ENCODE measurements at regions of chr7 and their contacts with region 1.

Region 1: DNA sequence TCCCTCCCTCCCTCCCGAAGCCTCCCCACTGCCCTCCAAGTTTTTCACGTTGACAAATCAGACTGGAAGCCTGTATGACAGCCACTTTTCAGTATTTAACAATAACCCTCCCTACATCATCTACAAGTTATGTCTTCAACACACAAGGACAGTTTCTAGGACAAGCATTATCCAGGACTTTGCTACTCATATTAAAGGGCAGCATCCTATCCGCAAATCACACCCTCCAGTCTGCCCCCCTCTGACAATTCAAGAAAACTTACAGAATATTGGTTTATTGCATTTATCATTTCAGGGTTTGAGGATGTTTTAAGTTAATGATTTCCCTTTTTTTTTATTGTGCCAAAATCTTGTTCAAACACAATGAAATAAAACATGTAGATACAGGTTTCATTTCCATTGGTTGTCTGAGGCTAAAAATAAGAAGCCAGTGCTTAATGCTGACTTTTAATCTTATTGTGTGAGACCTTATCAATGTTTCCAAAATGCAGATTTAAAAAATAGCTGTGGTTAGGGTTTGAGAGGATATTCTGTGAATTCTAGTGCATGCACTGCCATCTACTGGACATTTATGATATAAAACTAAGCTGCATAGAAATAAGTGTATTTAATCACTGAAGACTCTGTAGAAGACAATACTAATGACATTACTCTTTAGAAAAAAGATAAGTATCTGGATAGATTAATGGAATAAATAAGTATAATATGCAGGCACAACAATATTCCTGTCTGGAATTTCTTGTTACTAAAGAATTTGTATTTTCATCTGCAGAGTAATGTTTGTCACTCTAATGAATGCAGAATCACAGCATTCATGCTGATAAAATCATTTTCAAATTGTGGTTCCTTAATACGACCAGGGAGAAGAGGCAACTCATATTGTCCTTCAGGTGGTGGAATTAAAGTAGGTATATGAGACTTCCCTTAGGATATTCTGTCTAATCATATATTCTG is 64.1 kb downstream of the CAV1 start:
- DNase-seq: peak; percentile 21
- H3K4me3 ChIP-seq: no peak overlapping the region; a peak in 1 of 4 replicates
- H3K27ac ChIP-seq: peak overlapping the region; percentile 7 to 76; a peak in 3 of 4 replicates
- H3K4me1 ChIP-seq: peaks cover 5 to 19% of the 10 kb centered on the region in 2 experiments; a peak in 3 of 4 replicates
- H3K27me3 ChIP-seq: no peaks in the 10 kb centered on the region; the same call in 1 of the 2 replicates
- CTCF ChIP-seq: peak; percentile 93
- EP300 ChIP-seq: 0 out of 4 replicates have a peak, but pooled peaks of 1 of the 2 experiments have one; percentile 1
- RAD21 ChIP-seq: peak; percentile 88

Region 2: DNA sequence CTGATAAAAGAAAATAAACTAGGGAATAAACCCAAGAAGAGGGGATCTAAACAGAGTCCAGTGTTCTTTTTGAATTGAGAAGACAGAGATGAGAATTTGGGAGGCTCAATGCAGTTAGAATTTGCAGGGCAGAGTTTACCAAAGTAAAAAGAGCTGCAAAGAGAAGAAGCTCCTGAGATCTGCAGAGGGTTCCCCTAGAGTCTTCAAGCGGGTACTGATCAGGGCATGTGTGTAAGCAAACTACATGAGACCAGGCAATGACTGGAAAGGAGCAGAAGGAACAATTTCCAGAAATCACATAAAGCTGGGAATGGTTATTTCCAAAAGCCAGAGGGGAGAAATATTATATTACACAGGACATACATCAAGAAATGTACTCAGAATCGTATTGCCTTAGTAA is 436.6 kb before region 1 on chr7:
- CTCF ChIA-PET with region 1: interaction called, 12 read pairs
- POLR2A ChIA-PET with region 1: no interaction called
- DNase-seq: no peak
- H3K4me3 ChIP-seq: no peak overlapping the region
- H3K27ac ChIP-seq: no peak overlapping the region
- H3K4me1 ChIP-seq: no peaks in the 10 kb centered on the region
- H3K27me3 ChIP-seq: peaks cover 49% of the 10 kb centered on the region
- CTCF ChIP-seq: no peak
- EP300 ChIP-seq: no peak
- RAD21 ChIP-seq: no peak

Region 3: DNA sequence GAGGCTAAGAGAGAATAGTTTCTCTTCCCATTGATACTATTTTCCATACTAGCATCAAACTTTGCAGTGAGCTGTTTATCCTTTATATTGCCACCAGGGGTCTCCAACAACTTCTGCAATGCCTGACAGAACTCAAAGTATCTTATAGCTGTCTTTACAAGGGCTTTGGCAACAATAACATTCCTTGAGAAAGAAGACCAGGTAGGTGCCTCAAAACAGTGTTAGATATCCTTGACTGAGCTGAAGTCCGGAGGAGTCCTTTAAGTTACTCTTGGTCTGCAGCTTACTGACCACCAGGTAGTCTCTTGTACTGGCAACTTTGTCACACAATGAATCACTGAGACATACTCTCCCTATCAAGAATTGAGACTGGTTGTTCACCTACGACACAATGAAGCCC is 408.6 kb before region 1 on chr7:
- CTCF ChIA-PET with region 1: interaction called, 35 read pairs
- POLR2A ChIA-PET with region 1: no interaction called
- DNase-seq: peak; percentile 71
- H3K4me3 ChIP-seq: no peak overlapping the region
- H3K27ac ChIP-seq: no peak overlapping the region
- H3K4me1 ChIP-seq: peaks cover 0 to 6% of the 10 kb centered on the region in 2 experiments; a peak in 1 of 4 replicates
- H3K27me3 ChIP-seq: no peaks in the 10 kb centered on the region
- CTCF ChIP-seq: peak; percentile 95
- EP300 ChIP-seq: no peak
- RAD21 ChIP-seq: peak; percentile 95

Region 4: DNA sequence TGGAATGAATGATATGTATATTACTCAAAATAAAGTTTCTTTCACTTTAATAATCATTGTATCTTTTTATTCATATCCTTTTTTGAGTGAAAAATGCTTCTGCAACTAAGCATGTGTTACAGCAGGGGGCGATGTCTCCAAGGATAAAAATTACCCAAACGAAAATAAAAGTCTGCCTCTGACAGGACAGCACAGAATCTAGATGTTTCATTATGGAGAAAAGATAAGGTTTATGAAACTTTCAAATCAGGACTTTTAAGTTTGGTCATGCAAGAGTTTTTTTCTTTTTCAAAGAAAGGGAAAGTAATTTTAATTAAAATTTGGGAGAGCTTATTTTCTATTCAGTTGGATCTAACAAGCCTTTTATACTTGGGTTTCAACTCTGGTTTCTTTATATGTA is 330.2 kb before region 1 on chr7:
- CTCF ChIA-PET with region 1: interaction called, 39 read pairs
- POLR2A ChIA-PET with region 1: no interaction called
- DNase-seq: peak; percentile 32
- H3K4me3 ChIP-seq: peak overlapping the region in 1 of 2 experiments; percentile 4; a peak in 1 of 4 replicates
- H3K27ac ChIP-seq: peak overlapping the region; percentile 31 to 43; a peak in 3 of 4 replicates
- H3K4me1 ChIP-seq: peaks cover 0 to 12% of the 10 kb centered on the region in 2 experiments; a peak in 2 of 4 replicates
- H3K27me3 ChIP-seq: no peaks in the 10 kb centered on the region
- CTCF ChIP-seq: peak; percentile 99
- EP300 ChIP-seq: no peak
- RAD21 ChIP-seq: peak; percentile 87

Region 5: GRCh38 chr7:116576350-116577319 is 12.3 kb before region 1 on chr7:
- CTCF ChIA-PET with region 1: interaction called, 20 read pairs
- POLR2A ChIA-PET with region 1: no interaction called
- DNase-seq: no peak
- H3K4me3 ChIP-seq: peak overlapping the region in 1 of 2 experiments; percentile 18; a peak in 2 of 4 replicates
- H3K27ac ChIP-seq: peak overlapping the region; percentile 87 to 99
- H3K4me1 ChIP-seq: peaks cover 3 to 55% of the 10 kb centered on the region in 2 experiments; a peak in 3 of 4 replicates
- H3K27me3 ChIP-seq: no peaks in the 10 kb centered on the region
- CTCF ChIP-seq: peak; percentile 35
- EP300 ChIP-seq: peak; percentile 45 to 96
- RAD21 ChIP-seq: no peak

Region 6: DNA sequence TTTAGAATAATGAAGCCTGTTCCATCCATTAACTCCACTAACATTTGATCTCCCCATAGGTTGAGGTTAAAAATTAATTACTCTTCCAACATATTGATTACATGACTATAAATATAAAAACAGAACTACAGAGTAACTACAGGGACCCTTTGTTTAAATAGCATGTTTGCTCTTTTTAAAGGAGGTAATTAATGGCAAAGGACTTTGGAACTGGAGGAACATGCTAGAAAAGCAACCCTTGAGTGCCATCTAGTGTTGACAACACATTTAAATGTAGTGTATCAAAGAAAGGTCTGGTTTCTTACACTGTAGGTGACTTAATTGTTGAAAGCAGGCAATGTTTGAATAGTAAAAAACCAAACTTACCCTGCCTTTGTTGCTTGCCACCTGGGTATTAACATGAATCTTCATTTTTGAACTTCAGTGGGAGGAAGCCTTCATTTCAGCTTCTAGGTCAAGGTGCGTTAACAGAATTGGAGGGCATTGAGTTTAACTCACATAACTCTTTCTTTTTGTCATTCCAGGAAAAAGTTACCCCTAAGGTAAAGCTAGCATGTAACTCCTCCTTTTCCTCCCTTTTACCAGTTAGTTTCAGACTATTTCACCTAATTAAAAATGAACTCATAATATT is 220.8 kb after region 1 on chr7:
- CTCF ChIA-PET with region 1: interaction called, 192 read pairs
- POLR2A ChIA-PET with region 1: no interaction called
- DNase-seq: peak; percentile 47
- H3K4me3 ChIP-seq: no peak overlapping the region
- H3K27ac ChIP-seq: no peak overlapping the region
- H3K4me1 ChIP-seq: no peaks in the 10 kb centered on the region; a peak in 2 of 4 replicates
- H3K27me3 ChIP-seq: peaks cover 42% of the 10 kb centered on the region; the same call in 1 of the 2 replicates
- CTCF ChIP-seq: peak; percentile 91
- EP300 ChIP-seq: no peak
- RAD21 ChIP-seq: peak; percentile 94

Measured in SK-N-SH (cell line).